Tibial artery (tissue), 4 donors: ENCODE measurements at regions of chr2 and their contacts with region 1.

Region 1: GRCh38 chr2:54838585-54839035 is 115.1 kb downstream of the EML6 start:
- DNase-seq: peak; percentile 59 to 73
- H3K4me3 ChIP-seq: no peak overlapping the region
- H3K27ac ChIP-seq: no peak overlapping the region
- H3K4me1 ChIP-seq: peaks cover 0 to 4% (median 0%) of the 10 kb centered on the region in 4 donors
- H3K27me3 ChIP-seq: no peaks in the 10 kb centered on the region
- CTCF ChIP-seq: peak; percentile 71 to 91

Region 2: GRCh38 chr2:54106631-54107454 is 731.8 kb before region 1 on chr2:
- intact Hi-C with region 1: loop called (anchors 10 kb)
- DNase-seq: no peak
- H3K4me3 ChIP-seq: no peak overlapping the region
- H3K27ac ChIP-seq: peak overlapping the region in 1 of 2 donors; percentile 29
- H3K4me1 ChIP-seq: peaks cover 0 to 16% (median 6%) of the 10 kb centered on the region in 4 donors
- H3K27me3 ChIP-seq: no peaks in the 10 kb centered on the region
- CTCF ChIP-seq: peak; percentile 64 to 73

Region 3: GRCh38 chr2:54665436-54665856 is 173.2 kb before region 1 on chr2:
- intact Hi-C with region 1: loop called (anchors 10 kb)
- DNase-seq: no peak
- H3K4me3 ChIP-seq: no peak overlapping the region
- H3K27ac ChIP-seq: peak overlapping the region; percentile 59
- H3K4me1 ChIP-seq: peaks cover 0 to 42% (median 33%) of the 10 kb centered on the region in 4 donors
- H3K27me3 ChIP-seq: no peaks in the 10 kb centered on the region
- CTCF ChIP-seq: peak; percentile 19 to 42

Region 4: GRCh38 chr2:54983345-54984260 is 145.0 kb after region 1 on chr2:
- intact Hi-C with region 1: no loop called
- DNase-seq: no peak
- H3K4me3 ChIP-seq: no peak overlapping the region
- H3K27ac ChIP-seq: no peak overlapping the region
- H3K4me1 ChIP-seq: peaks cover 0 to 100% (median 51%) of the 10 kb centered on the region in 4 donors
- H3K27me3 ChIP-seq: no peaks in the 10 kb centered on the region
- CTCF ChIP-seq: no peak